ENCODE measurements at regions of chr10 and their contacts with region 1.

Region 1: GRCh38 chr10:110803830-110804338 is 67.8 kb upstream of the PDCD4 start:
- DNase-seq: peak; percentile 49
- H3K4me3 Mint-ChIP-seq: no peak overlapping the region
- H3K27ac Mint-ChIP-seq: peak overlapping the region; percentile 15
- H3K4me1 Mint-ChIP-seq: peaks cover 36% of the 10 kb centered on the region
- H3K27me3 Mint-ChIP-seq: no peaks in the 10 kb centered on the region

Region 2: DNA sequence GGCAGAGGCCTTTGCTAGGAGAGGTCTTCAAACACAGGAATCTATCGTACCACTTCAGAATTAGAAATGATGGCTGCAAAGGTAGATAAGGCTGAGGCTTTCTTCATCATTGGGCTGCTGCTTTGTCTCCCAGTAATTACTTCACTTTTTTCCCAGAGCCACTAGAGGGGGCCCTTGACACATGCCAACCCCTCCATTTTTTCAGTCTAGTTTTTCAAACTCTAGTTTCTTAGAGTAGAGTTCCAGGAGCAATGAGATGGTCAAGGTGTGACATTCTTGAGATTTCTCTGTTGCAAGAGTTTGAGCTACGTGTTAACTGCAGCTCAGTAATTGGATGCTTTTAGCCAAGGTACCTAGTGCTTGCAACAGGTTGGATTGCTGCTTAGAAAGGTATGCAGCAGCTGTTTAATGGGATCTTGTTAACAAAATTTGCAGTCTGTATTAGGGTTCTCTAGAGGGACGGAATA is 193.5 kb before region 1 on chr10:
- CTCF ChIA-PET with region 1: interaction called, 3 read pairs
- POLR2A ChIA-PET with region 1: no interaction called
- intact Hi-C with region 1: loop called (anchors 5 kb)
- DNase-seq: peak; percentile 66
- H3K4me3 Mint-ChIP-seq: no peak overlapping the region
- H3K27ac Mint-ChIP-seq: no peak overlapping the region
- H3K4me1 Mint-ChIP-seq: peaks cover 26% of the 10 kb centered on the region
- H3K27me3 Mint-ChIP-seq: no peaks in the 10 kb centered on the region

Region 3: DNA sequence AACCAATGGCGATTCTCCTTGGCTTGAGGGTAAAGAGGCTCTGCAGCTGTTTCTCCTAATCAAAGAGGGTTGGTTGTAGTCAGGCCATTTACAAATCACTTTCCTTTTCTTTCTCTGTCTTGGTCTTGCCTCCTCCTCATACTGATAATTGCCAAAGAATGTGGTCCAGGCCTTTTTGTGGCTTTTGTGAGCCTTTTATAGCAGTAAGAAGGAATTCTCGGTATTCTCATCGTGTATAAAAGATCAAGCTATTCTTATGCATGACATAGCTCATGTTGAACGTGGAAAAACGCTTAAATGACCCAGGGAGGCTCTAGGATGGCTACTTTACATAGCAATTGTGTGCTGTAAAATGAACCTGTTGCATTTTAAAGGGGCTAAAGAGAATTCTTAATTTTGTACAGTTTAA is 97.2 kb before region 1 on chr10:
- CTCF ChIA-PET with region 1: no interaction called
- POLR2A ChIA-PET with region 1: no interaction called
- intact Hi-C with region 1: no loop called
- DNase-seq: no peak
- H3K4me3 Mint-ChIP-seq: no peak overlapping the region
- H3K27ac Mint-ChIP-seq: no peak overlapping the region
- H3K4me1 Mint-ChIP-seq: no peaks in the 10 kb centered on the region
- H3K27me3 Mint-ChIP-seq: no peaks in the 10 kb centered on the region

Region 4: GRCh38 chr10:110843031-110843430 is 39.1 kb after region 1 on chr10:
- CTCF ChIA-PET with region 1: no interaction called
- POLR2A ChIA-PET with region 1: no interaction called
- intact Hi-C with region 1: loop called (anchors 5 kb)
- DNase-seq: peak; percentile 70
- H3K4me3 Mint-ChIP-seq: no peak overlapping the region
- H3K27ac Mint-ChIP-seq: peak overlapping the region; percentile 24
- H3K4me1 Mint-ChIP-seq: peaks cover 25% of the 10 kb centered on the region
- H3K27me3 Mint-ChIP-seq: no peaks in the 10 kb centered on the region

Region 5: DNA sequence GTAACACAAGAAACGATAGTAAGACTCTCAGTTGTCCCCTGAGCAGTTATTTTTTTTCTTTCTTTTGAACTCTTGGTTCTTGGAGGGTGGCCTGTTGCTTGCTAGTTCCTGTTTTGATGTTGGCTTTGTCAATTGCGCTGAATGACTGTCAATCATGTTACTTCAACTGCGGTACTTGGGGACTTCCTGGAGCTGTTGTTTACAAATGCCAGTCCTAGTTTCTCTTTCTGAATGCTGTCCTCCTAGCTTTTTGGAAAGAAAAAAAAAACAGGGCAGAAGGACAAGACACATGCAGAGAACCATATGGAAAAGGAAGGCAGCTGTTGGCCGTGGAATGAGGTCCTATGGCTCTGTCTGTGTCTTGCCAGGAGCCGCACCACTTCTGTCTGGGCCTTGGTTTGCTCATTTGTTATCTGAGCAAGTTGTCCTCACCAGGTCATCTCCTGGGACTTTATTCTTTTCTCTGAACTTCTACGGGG is 60.8 kb after region 1 on chr10:
- CTCF ChIA-PET with region 1: interaction called, 6 read pairs
- POLR2A ChIA-PET with region 1: no interaction called
- intact Hi-C with region 1: loop called (anchors 2 kb)
- DNase-seq: peak; percentile 65
- H3K4me3 Mint-ChIP-seq: peak overlapping the region; percentile 72
- H3K27ac Mint-ChIP-seq: peak overlapping the region; percentile 95
- H3K4me1 Mint-ChIP-seq: peaks cover 93% of the 10 kb centered on the region
- H3K27me3 Mint-ChIP-seq: no peaks in the 10 kb centered on the region

Region 6: DNA sequence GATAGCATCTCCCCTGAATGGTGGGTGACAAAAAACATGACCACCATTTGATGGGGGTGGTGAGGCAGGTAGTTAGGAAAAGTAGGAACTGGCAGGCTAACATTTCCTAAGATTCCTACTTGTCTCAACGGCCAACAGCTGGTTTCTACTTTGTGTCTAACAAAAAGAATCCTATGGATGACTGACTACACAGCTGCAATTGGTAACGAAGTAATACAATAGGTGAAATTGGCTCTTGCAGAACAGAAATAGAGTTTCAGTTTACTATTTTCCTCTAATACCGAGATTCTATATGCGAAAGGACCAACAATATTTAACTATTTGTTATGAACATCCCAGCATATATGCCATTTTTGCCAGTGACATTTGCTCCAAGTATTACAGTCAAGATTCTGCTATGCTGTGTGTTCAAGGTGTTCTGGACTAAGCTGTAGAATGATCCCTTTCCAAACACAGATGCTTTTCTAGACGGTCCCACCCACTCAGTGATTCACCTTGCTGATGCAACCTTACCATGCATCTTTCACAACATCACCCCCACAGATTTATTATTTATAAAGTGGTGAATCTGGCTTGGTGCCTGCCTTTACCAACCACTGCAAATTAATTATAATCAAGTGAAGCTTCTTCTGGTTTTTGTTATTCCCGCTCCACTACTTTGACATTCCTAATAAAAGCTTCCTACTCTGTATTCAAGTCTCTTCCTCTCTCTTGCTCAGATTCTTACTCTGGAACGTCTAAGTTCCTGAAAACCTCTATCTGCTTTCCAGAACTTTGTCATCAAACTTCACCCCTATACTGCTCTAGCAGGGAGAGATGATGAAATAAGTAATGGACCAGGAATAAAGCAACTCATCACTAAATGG is 98.3 kb after region 1 on chr10:
- CTCF ChIA-PET with region 1: interaction called, 11 read pairs
- POLR2A ChIA-PET with region 1: no interaction called
- intact Hi-C with region 1: no loop called
- DNase-seq: peak; percentile 68
- H3K4me3 Mint-ChIP-seq: peak overlapping the region; percentile 6
- H3K27ac Mint-ChIP-seq: peak overlapping the region; percentile 79
- H3K4me1 Mint-ChIP-seq: peaks cover 40% of the 10 kb centered on the region
- H3K27me3 Mint-ChIP-seq: no peaks in the 10 kb centered on the region

Region 7: GRCh38 chr10:111126077-111126476 is 322.2 kb after region 1 on chr10:
- CTCF ChIA-PET with region 1: no interaction called
- POLR2A ChIA-PET with region 1: no interaction called
- intact Hi-C with region 1: no loop called
- DNase-seq: no peak
- H3K4me3 Mint-ChIP-seq: no peak overlapping the region
- H3K27ac Mint-ChIP-seq: no peak overlapping the region
- H3K4me1 Mint-ChIP-seq: no peaks in the 10 kb centered on the region
- H3K27me3 Mint-ChIP-seq: peaks cover 9% of the 10 kb centered on the region

Measured in activated CD4-positive, alpha-beta memory T cell treated with anti-CD3 and anti-CD28 coated beads for 36 hours (primary cell).